ENCODE measurements at regions of chr15 and their contacts with region 1.

Region 1: GRCh38 chr15:40405501-40406381 is at the start of gene IVD:
- DNase-seq: peak; percentile 72 to 97
- H3K4me3 ChIP-seq: peak within 1 kb of the TSS; percentile 73 to 98
- H3K27ac ChIP-seq: peak within 1 kb of the TSS; percentile 75 to 80
- H3K4me1 ChIP-seq: peaks cover 15 to 17% of the 10 kb centered on the region in 2 donors
- H3K27me3 ChIP-seq: no peaks in the 10 kb centered on the region
- CTCF ChIP-seq: no peak
- total RNA-seq, gene IVD: 39.5 TPM

Region 2: GRCh38 chr15:40323239-40323952 is 82.3 kb before region 1 on chr15 and contains the start of gene INAFM2:
- intact Hi-C with region 1: loop called (anchors 1 kb)
- DNase-seq: peak; percentile 74 to 96
- H3K4me3 ChIP-seq: peak within 1 kb of the TSS; percentile 74 to 82
- H3K27ac ChIP-seq: peak within 1 kb of the TSS; percentile 90 to 98
- H3K4me1 ChIP-seq: peaks cover 30 to 32% of the 10 kb centered on the region in 2 donors
- H3K27me3 ChIP-seq: no peaks in the 10 kb centered on the region
- CTCF ChIP-seq: peak; percentile 66 to 83 (median 67)
- total RNA-seq, gene INAFM2: 69.8 TPM

Region 3: DNA sequence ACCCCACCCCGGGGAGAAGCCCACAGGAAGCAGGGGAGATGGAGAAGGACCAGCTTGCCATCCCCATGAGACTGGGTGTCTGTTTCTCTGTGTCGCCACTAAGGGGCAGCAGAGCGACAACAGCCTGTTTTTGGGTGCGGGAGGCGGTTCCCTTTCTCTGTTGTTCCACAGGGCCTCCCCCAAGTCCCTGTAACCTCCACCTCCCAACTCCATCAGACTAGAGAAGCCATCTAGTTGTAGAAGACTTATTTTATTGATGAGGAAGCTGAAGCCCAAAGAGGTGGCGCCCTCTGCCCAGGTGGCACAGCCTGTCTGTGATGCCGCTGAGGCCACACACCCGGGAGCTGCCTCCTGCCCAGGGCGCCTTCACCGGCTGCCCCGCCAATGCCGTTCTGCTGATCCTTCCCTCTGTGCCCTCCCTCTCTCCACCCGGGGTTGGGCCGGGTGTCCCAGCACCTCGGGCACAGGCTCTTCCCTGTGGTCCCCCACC is 61.1 kb before region 1 on chr15:
- intact Hi-C with region 1: loop called (anchors 5 kb)
- DNase-seq: no peak
- H3K4me3 ChIP-seq: no peak overlapping the region
- H3K27ac ChIP-seq: peak overlapping the region; percentile 98 to 99
- H3K4me1 ChIP-seq: peaks cover 20 to 45% of the 10 kb centered on the region in 2 donors
- H3K27me3 ChIP-seq: no peaks in the 10 kb centered on the region
- CTCF ChIP-seq: peak; percentile 69 to 87 (median 80)

Region 4: GRCh38 chr15:40367686-40368611 is 37.8 kb before region 1 on chr15:
- intact Hi-C with region 1: loop called (anchors 5 kb)
- DNase-seq: peak; percentile 67 to 91
- H3K4me3 ChIP-seq: peak overlapping the region; percentile 41 to 61
- H3K27ac ChIP-seq: peak overlapping the region in 1 of 2 donors; percentile 24
- H3K4me1 ChIP-seq: peaks cover 10 to 17% of the 10 kb centered on the region in 2 donors
- H3K27me3 ChIP-seq: no peaks in the 10 kb centered on the region
- CTCF ChIP-seq: peak; percentile 84 to 98 (median 85)

Region 5: DNA sequence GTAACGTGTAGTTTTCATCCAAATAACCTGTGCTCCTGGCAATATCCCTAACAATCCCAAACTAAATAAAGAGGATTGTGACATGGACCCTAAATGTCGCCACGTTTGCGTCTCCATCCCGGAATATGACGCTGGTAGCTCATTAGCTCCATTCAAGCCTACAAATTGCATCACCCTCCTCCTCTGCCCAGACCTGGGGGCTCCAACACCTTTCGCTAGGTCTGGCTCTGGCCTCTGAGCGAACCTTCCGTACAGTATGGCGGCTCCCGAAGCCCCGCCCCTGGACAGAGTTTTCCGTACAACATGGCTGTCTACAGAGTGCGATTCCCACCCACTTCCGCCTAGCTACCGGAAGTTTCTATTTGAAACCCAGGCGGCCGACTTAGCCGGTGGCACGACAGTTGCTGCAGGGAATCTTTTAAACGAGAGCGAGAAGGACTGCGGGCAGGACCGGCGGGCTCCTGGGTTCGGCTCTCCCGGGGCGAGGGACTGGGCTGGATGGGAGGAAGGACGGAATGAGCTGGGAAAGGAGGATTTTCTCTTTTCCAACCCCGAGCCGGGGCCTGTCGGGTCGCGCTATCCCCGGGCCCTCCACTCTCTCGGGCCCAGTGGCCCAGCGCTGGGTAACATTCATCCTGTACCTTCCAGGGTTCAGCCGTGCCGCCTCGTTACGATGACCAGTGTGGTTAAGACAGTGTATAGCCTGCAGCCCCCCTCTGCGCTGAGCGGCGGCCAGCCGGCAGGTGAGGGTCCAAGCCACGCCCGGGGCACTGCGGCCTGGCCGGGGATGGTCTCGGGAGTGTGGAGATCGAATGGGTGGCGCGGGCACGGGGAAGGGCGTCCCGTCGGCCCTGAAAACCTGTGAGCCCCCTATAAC is 22.9 kb before region 1 on chr15 and contains the start of gene KNSTRN:
- intact Hi-C with region 1: loop called (anchors 1 kb)
- DNase-seq: peak; percentile 69 to 96
- H3K4me3 ChIP-seq: peak within 1 kb of the TSS; percentile 78 to 96
- H3K27ac ChIP-seq: no peak within 1 kb of the TSS
- H3K4me1 ChIP-seq: peaks cover 0 to 14% of the 10 kb centered on the region in 2 donors
- H3K27me3 ChIP-seq: no peaks in the 10 kb centered on the region
- CTCF ChIP-seq: no peak
- total RNA-seq, gene KNSTRN: 5.1 TPM

Region 6: DNA sequence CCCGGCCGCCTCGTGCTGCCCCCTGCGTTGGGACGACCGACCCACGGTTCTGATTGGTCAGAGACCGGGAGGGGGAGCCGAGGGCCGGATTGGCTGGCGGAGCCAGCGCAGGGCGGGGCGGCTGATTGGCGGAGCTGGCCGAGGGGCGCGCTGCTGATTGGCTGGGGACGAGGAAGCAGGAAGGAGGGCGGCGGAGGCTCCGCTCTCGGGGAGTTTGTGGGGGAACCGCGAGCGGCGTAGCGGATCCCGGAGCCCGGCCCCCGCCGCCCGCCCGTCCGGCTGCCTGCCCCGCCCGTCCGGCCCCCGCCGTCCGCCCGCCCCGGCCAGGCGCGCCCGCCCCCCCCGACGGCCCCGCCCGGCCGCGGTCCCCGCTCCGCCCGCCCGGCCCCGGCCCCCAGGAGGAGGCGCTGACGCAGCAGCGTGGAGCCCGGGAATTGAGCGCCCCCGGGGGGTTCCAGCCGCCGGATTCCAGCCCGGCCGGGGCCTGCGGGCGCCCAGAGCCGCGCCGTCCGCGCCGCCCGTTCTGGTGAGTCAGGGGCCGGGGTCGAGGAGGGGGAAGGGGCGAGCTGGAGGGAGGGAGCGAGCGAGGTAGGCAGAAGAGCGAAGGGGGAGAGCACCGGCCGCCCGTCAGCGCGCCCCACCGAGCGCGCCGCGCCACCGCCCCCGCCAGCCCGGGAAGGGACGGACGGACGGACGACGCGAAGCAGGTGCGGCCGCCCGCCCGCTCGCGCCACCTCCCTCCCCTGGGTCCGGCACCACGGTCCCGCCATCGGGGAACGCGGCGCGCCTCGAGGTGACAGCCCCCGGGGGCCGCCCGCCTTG is 35.2 kb after region 1 on chr15 and contains the start of gene BAHD1:
- intact Hi-C with region 1: loop called (anchors 2 kb)
- DNase-seq: peak; percentile 85 to 97
- H3K4me3 ChIP-seq: peak within 1 kb of the TSS; percentile 95 to 97
- H3K27ac ChIP-seq: peak within 1 kb of the TSS; percentile 31 to 75
- H3K4me1 ChIP-seq: peaks cover 12 to 33% of the 10 kb centered on the region in 2 donors
- H3K27me3 ChIP-seq: peaks cover 11% of the 10 kb centered on the region
- CTCF ChIP-seq: peak in 1 of 3 experiments; percentile 28
- total RNA-seq, gene BAHD1: 10.6 TPM

Region 7: DNA sequence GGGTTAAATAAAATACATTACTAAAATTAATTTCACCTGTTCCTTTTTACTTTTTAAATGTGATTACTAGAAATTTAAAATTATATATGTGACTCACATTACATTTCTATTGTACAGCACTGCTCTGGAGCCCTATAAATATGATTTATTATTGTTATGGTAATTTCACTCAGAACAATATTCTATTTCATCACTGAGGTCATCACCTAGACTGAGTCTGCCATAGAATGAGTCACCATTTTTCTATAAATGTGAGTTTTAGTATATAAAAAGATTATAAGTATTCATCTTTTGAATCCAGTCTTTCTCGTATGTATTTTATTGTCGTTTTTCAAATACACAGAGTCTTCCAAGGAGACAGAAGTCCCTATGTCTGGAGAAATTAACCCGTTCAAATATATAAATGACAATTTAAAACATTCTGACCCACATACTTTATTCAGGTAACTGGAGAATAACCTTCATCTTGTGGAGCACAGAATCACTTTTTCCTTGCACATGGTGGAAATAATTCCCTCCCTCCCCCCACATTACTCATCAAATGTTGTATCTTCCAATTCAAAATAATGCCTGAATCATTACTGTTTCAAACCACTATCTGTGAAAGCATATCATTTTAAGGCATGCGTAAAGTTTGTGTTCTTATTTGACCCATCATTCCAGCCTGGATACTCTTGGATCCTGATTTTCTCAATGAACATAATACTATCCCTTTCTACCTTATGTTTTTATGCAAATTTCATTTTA is 95.0 kb after region 1 on chr15:
- intact Hi-C with region 1: no loop called
- DNase-seq: no peak
- H3K4me3 ChIP-seq: no peak overlapping the region
- H3K27ac ChIP-seq: no peak overlapping the region
- H3K4me1 ChIP-seq: no peaks in the 10 kb centered on the region
- H3K27me3 ChIP-seq: no peaks in the 10 kb centered on the region
- CTCF ChIP-seq: no peak

Measured in ascending aorta (tissue), 2 donors.